Activated CD4-positive, alpha-beta T cell treated with anti-CD3 and anti-CD28 coated beads, Interleukin-2, amount 10 ng/mL, durations not matched to agents 24 days and 14 days (primary cell): ENCODE measurements at regions of chr9 and their contacts with region 1.

Region 1: DNA sequence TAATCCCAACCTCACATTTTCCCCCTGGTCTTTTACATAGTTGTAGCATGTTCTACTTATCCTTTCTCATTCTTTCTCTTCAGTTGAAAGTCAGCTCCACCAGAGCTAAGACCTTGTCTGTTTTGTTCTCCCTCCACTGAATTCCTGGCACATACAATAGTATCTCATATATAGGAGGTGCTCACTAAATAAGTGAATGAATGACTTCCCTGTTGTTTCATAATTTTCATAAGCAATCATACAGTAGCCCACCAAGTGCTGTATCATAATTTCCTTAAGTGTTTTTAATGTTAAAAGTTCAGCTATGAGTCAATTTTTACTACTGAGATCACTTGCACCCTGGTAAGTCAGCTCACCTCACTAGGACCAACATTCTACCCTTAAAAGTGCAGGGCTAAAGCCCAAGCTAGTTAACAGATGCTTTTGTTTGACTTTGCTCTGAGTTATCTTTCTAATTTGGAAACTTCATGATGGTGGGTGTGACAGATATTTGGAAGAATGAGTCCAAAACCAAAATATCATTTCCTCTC is 27.6 kb downstream of the TMEM245 start:
- DNase-seq: peak; percentile 39
- H3K4me3 Mint-ChIP-seq: no peak overlapping the region
- H3K27ac Mint-ChIP-seq: peak overlapping the region; percentile 48
- H3K4me1 Mint-ChIP-seq: peaks cover 42% of the 10 kb centered on the region
- H3K27me3 Mint-ChIP-seq: no peaks in the 10 kb centered on the region

Region 2: GRCh38 chr9:109052416-109052815 is 39.7 kb before region 1 on chr9:
- intact Hi-C with region 1: no loop called
- DNase-seq: no peak
- H3K4me3 Mint-ChIP-seq: no peak overlapping the region
- H3K27ac Mint-ChIP-seq: no peak overlapping the region
- H3K4me1 Mint-ChIP-seq: no peaks in the 10 kb centered on the region
- H3K27me3 Mint-ChIP-seq: no peaks in the 10 kb centered on the region

Region 3: DNA sequence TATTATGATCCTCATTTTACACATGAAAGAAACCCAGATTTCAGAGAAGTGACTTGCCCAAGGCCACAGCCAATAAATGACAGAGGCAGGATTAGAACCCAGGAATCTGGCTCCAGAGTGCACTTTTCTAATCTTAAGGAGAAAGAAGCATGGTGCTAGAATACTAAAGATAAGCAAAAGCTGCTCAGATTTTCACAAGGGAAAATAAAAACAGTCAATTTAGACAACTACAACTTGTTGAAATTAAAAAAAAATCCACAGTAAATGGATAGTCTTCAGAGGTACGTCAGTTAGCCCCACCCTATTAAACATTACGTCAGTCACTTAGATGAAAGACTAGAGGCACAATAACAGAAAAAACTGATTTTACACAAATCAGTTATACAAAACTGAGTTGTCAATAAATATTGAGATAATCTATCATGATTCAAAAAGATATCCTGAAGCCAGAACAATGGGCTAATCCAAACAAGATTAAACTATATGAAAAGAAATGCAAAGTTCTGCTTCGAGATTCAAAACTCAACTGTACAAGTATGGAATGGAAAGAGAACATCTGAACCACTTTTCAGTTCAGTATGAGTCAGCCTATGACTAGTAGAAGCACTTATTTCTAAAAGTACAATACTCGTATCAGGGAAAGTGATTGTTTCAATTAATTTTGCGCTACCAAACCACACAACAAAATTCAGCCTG is 18.4 kb after region 1 on chr9:
- intact Hi-C with region 1: loop called (anchors 2 kb)
- DNase-seq: no peak
- H3K4me3 Mint-ChIP-seq: peak overlapping the region; percentile 66
- H3K27ac Mint-ChIP-seq: peak overlapping the region; percentile 87
- H3K4me1 Mint-ChIP-seq: peaks cover 54% of the 10 kb centered on the region
- H3K27me3 Mint-ChIP-seq: no peaks in the 10 kb centered on the region

Region 4: DNA sequence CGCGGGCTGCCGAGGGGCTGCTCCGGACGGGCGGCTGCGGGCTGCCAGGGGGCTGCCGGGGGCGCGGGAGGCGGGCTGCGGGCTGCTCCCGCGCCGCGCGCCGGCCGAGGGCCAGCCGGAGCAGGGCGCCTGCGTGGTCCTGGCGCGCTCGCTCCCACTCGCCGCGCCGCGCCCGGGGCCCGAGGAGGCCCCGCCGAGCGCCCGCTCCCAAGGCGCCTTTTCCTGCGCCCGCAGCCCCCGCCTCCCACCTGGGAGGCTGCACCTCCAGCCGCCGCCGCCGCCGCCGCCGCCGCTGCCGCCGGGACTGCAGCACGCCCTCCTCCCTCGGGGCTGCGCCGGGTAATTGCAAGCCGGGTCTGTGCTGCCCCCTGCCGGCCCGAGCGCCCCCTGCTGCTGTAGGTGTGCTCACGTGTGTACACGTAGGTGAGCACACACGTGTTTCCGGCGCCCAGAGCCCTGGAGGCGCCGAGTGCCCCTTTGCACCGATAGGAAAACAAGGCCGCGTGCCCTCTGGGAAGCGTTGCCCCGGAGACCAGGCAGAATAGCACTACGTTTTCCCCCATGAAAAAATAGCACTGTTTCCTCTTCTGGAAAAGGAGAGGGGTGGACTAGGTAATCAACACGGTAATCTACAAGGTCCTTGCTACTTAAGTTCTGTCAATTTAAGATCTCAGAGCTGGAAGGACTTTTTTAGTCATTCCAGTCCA is 228.8 kb after region 1 on chr9 and contains the start of gene EPB41L4B:
- intact Hi-C with region 1: no loop called
- DNase-seq: peak; percentile 97
- H3K4me3 Mint-ChIP-seq: peak within 1 kb of the TSS; percentile 81
- H3K27ac Mint-ChIP-seq: peak within 1 kb of the TSS; percentile 66
- H3K4me1 Mint-ChIP-seq: peaks cover 10% of the 10 kb centered on the region
- H3K27me3 Mint-ChIP-seq: peaks cover 68% of the 10 kb centered on the region
- total RNA-seq, gene EPB41L4B: 1.2 and 1.5 TPM in 2 replicates